AG04450 (cell line): ENCODE measurements at regions of chr11 and their contacts with region 1.

Region 1: GRCh38 chr11:93730108-93731107 is 10.9 kb downstream of the TAF1D start:
- DNase-seq: no peak
- H3K4me3 ChIP-seq: no peak overlapping the region
- H3K27ac ChIP-seq: no peak overlapping the region
- H3K27me3 ChIP-seq: no peaks in the 10 kb centered on the region
- CTCF ChIP-seq: no peak

Region 2: GRCh38 chr11:93710239-93710638 is 20.2 kb before region 1 on chr11:
- CTCF ChIA-PET with region 1: no interaction called
- POLR2A ChIA-PET with region 1: no interaction called
- DNase-seq: no peak
- H3K4me3 ChIP-seq: no peak overlapping the region
- H3K27ac ChIP-seq: no peak overlapping the region
- H3K27me3 ChIP-seq: no peaks in the 10 kb centered on the region
- CTCF ChIP-seq: no peak

Region 3: DNA sequence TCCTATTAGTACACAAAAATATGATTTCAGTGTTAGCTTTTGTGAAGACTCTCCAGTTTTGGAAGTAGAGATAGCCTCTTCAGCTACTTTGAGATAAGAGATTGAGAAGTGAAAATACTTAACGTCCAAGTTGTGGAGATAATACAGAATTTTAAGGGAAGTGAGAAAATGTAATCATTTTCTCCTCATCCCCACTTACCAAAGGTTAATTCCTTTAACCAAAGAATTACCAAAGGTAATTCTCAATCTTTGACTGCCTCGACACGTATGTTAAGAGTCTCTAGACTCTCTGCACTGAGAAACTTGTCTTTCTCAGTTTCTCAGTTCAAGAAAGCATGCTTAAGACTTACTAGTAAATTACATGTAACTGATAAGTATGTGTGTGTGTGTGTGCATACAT is 26.3 kb after region 1 on chr11:
- CTCF ChIA-PET with region 1: no interaction called
- POLR2A ChIA-PET with region 1: no interaction called
- DNase-seq: no peak
- H3K4me3 ChIP-seq: no peak overlapping the region
- H3K27ac ChIP-seq: no peak overlapping the region
- H3K27me3 ChIP-seq: no peaks in the 10 kb centered on the region
- CTCF ChIP-seq: no peak

Region 4: GRCh38 chr11:93791493-93791892 is 61.1 kb after region 1 on chr11:
- CTCF ChIA-PET with region 1: no interaction called
- POLR2A ChIA-PET with region 1: interaction called, 11 read pairs
- DNase-seq: no peak
- H3K4me3 ChIP-seq: no peak overlapping the region
- H3K27ac ChIP-seq: no peak overlapping the region
- H3K27me3 ChIP-seq: no peaks in the 10 kb centered on the region
- CTCF ChIP-seq: no peak

Region 5: GRCh38 chr11:94241896-94242295 is 511.5 kb after region 1 on chr11:
- CTCF ChIA-PET with region 1: no interaction called
- POLR2A ChIA-PET with region 1: no interaction called
- DNase-seq: no peak
- H3K4me3 ChIP-seq: no peak overlapping the region
- H3K27ac ChIP-seq: no peak overlapping the region
- H3K27me3 ChIP-seq: no peaks in the 10 kb centered on the region
- CTCF ChIP-seq: no peak